ENCODE measurements at regions of chr2 and their contacts with region 1.

Region 1: GRCh38 chr2:6896930-6897759 is 19.6 kb downstream of the RSAD2 start:
- DNase-seq: no peak
- H3K4me3 ChIP-seq: no peak overlapping the region
- H3K4me3 Mint-ChIP-seq: no peak overlapping the region
- H3K27ac Mint-ChIP-seq: no peak overlapping the region
- H3K4me1 ChIP-seq: no peaks in the 10 kb centered on the region
- H3K4me1 Mint-ChIP-seq: no peaks in the 10 kb centered on the region
- H3K27me3 ChIP-seq: no peaks in the 10 kb centered on the region
- H3K27me3 Mint-ChIP-seq: peaks cover 5% of the 10 kb centered on the region
- CTCF ChIP-seq: peak; percentile 54 to 57

Region 2: GRCh38 chr2:6927186-6927585 is 30.0 kb after region 1 on chr2:
- CTCF ChIA-PET with region 1: no interaction called
- POLR2A ChIA-PET with region 1: no interaction called
- intact Hi-C with region 1: no loop called
- DNase-seq: no peak
- H3K4me3 ChIP-seq: no peak overlapping the region
- H3K4me3 Mint-ChIP-seq: no peak overlapping the region
- H3K27ac Mint-ChIP-seq: no peak overlapping the region
- H3K4me1 ChIP-seq: no peaks in the 10 kb centered on the region
- H3K4me1 Mint-ChIP-seq: no peaks in the 10 kb centered on the region
- H3K27me3 ChIP-seq: no peaks in the 10 kb centered on the region
- H3K27me3 Mint-ChIP-seq: no peaks in the 10 kb centered on the region
- CTCF ChIP-seq: no peak

Region 3: GRCh38 chr2:6968319-6969100 is 71.4 kb after region 1 on chr2:
- CTCF ChIA-PET with region 1: no interaction called
- POLR2A ChIA-PET with region 1: no interaction called
- intact Hi-C with region 1: loop called (anchors 1 kb)
- DNase-seq: no peak
- H3K4me3 ChIP-seq: no peak overlapping the region
- H3K4me3 Mint-ChIP-seq: no peak overlapping the region
- H3K27ac Mint-ChIP-seq: no peak overlapping the region
- H3K4me1 ChIP-seq: no peaks in the 10 kb centered on the region
- H3K4me1 Mint-ChIP-seq: no peaks in the 10 kb centered on the region
- H3K27me3 ChIP-seq: no peaks in the 10 kb centered on the region
- H3K27me3 Mint-ChIP-seq: no peaks in the 10 kb centered on the region
- CTCF ChIP-seq: no peak

Region 4: GRCh38 chr2:7044261-7045250 is 147.4 kb after region 1 on chr2:
- CTCF ChIA-PET with region 1: interaction called, 3 read pairs
- POLR2A ChIA-PET with region 1: no interaction called
- intact Hi-C with region 1: loop called (anchors 1 kb)
- DNase-seq: peak in 1 of 2 experiments; percentile 51
- H3K4me3 ChIP-seq: no peak overlapping the region
- H3K4me3 Mint-ChIP-seq: no peak overlapping the region
- H3K27ac Mint-ChIP-seq: no peak overlapping the region
- H3K4me1 ChIP-seq: no peaks in the 10 kb centered on the region
- H3K4me1 Mint-ChIP-seq: no peaks in the 10 kb centered on the region
- H3K27me3 ChIP-seq: no peaks in the 10 kb centered on the region
- H3K27me3 Mint-ChIP-seq: peaks cover 4% of the 10 kb centered on the region
- CTCF ChIP-seq: peak; percentile 83 to 91

Region 5: DNA sequence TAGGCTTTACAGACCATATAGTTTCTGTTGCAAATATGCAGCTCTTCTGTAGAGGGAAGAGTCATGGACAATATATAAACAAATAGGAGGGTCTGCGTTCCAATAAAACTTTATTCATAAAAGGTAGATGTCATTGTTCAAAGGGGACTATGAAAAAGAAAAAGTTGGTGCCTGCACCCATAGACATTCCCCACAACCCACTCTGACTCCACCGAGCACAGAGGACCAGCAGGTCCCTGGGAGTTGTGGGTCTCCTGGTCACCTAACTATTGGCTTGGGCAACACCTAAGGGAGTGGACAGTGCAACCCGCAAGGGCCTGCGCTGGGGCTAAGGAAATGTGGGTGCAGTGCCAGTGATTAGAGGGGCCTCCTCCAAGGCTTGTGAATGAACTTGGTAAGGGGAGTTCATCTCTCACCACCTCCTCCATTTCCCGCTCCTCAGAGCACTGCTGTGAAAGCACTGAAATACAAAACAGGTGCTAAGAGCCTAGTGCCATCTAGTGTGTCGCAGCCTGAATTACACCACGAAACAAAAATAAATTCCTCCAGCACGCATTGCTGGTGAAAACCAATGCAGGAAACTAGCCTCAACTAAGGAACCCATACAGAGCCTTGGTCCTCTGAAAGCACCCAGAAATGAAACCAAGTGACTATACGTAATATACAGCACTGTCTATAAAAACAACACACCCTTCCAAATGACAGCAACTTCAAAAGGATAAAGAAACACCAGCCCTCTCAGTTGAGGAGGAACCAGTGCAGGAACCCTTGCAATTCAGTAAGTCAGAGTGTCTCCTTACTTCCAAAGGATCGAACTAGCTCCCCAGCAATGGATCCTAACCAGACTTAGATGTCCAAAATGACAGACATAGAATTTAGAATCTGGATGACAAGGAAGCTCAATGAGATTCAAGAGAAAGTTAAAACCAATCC is 186.7 kb after region 1 on chr2:
- CTCF ChIA-PET with region 1: no interaction called
- POLR2A ChIA-PET with region 1: no interaction called
- intact Hi-C with region 1: loop called (anchors 1 kb)
- DNase-seq: peak in 1 of 2 experiments; percentile 35
- H3K4me3 ChIP-seq: no peak overlapping the region
- H3K4me3 Mint-ChIP-seq: no peak overlapping the region
- H3K27ac Mint-ChIP-seq: no peak overlapping the region
- H3K4me1 ChIP-seq: no peaks in the 10 kb centered on the region
- H3K4me1 Mint-ChIP-seq: no peaks in the 10 kb centered on the region
- H3K27me3 ChIP-seq: no peaks in the 10 kb centered on the region
- H3K27me3 Mint-ChIP-seq: peaks cover 11% of the 10 kb centered on the region
- CTCF ChIP-seq: peak; percentile 50 to 59